HEK293 (cell line): ENCODE measurements at regions of chr6 and their contacts with region 1.

Region 1: DNA sequence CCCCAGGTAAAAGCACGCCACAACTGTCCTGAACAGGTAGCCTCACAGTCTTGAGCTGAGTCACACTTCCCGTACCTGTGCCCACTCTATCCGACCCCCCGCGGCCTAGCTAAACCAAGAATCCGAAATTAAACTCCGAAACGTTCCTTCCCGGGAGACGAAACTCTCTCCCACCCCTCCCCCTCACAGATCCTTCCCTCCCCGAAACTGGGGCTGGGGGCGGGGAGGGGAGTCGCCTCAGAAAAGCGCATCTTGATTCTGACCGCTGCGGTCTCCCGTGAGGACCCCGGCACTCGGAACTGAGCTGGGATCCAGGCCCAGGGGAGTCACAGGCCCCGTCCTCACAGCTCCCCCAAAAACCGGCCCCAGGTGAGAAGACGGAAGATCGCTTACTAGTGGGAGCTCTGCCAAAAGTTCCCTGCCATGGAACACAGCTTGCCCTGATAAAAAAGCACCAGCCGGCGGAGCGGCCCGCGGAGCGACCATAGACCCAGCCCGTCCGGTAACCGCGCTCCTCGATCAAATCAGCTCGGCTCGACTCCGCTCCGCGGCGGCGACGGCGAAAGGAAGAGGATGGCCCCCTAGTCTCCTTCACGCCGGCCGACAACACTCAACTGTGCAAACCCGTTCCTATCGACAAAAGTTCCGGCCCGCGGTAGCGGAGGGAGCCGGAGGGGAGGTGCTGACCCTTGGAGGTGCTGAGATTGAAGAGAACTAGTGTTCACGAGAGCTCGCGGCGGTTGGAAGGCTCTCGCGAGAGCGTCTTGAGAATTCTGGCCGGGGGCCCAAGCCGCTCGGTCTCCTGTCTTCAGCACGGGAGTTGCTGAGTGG is at the start of gene CCNC:
- H3K4me3 ChIP-seq: peak within 1 kb of the TSS; percentile 64
- H3K27ac ChIP-seq: peak within 1 kb of the TSS; percentile 83
- H3K4me1 ChIP-seq: peaks cover 5% of the 10 kb centered on the region; the same call in 1 of the 2 replicates
- CTCF ChIP-seq: no peak

Region 2: DNA sequence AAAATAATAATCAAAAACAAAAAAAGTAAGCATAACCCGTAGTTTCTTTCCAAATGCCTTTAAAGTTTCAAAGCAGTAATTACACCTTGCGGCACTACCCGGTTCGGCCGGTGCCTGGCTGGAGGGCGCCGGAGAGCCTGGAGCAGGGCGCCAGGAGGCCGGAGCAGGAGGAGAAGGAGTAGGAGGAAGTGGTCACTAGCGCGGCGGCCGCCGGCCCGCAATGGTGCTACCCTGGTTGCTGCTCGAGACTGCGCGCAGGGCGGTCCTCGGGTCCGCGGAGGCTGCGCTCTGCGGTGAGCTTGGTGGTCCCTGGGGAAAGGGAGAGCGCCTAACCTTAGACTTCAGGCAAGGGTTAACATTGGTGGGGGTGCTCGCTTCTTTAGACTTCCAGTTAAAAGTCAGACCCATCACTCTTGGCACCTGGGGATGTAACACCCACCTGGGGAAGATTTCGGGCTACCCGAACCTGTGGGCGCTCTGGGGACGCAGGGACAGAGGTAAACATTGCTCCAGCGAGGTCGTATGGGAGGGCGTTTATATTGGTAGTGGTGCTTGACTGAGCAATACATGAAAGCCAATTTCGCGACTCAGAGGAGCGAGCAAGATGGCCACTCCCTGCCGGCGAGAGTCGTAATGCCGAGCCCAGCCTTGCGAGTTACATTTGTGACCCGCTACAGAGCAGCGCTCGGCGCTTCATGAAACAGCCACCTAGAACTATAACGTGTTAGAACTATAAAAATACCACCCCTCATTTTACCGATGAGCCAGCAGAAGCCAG is 47.3 kb before region 1 on chr6:
- CTCF ChIA-PET with region 1: interaction called, 4 read pairs
- POLR2A ChIA-PET with region 1: interaction called, 13 read pairs
- H3K4me3 ChIP-seq: peak overlapping the region; percentile 76
- H3K27ac ChIP-seq: peak overlapping the region; percentile 85
- H3K4me1 ChIP-seq: peaks cover 4% of the 10 kb centered on the region; the same call in 1 of the 2 replicates
- CTCF ChIP-seq: peak; percentile 69

Region 3: GRCh38 chr6:99588618-99589289 is 20.4 kb after region 1 on chr6:
- CTCF ChIA-PET with region 1: no interaction called
- POLR2A ChIA-PET with region 1: interaction called, 29 read pairs
- H3K4me3 ChIP-seq: peak overlapping the region; percentile 51
- H3K27ac ChIP-seq: peak overlapping the region; percentile 50; the same call in 1 of the 2 replicates
- H3K4me1 ChIP-seq: no peaks in the 10 kb centered on the region; the same call in 1 of the 2 replicates
- CTCF ChIP-seq: peak; percentile 92

Region 4: DNA sequence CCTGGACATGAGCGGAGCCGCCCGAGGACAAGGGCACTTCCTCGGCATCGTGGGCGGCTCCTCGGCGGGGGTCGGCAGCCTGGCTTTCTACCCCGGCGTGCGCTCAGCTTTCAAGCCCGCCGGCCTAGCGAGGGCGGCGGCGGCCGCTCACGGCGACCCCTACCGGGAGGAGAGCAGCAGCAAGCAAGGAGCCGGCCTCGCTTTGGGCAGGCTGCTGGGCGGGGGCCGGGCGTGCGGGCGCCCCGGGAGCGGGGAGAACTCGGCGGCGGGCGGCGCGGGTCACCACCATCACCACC is 45.0 kb after region 1 on chr6:
- CTCF ChIA-PET with region 1: interaction called, 3 read pairs
- POLR2A ChIA-PET with region 1: interaction called, 30 read pairs
- H3K4me3 ChIP-seq: peak overlapping the region; percentile 52
- H3K27ac ChIP-seq: peak overlapping the region; percentile 59; the same call in 1 of the 2 replicates
- H3K4me1 ChIP-seq: 0 out of 2 replicates have a peak, but pooled peaks cover 10% of the 10 kb centered on the region
- CTCF ChIP-seq: peak; percentile 66